Testis (tissue), 5 donors: ENCODE measurements at regions of chr7 and their contacts with region 1.

Region 1: GRCh38 chr7:102390697-102391484 is 5.3 kb upstream of the PRKRIP1 start:
- DNase-seq: peak; percentile 81
- H3K4me3 ChIP-seq: no peak overlapping the region
- H3K27ac ChIP-seq: no peak overlapping the region
- H3K4me1 ChIP-seq: no peaks in the 10 kb centered on the region
- H3K27me3 ChIP-seq: no peaks in the 10 kb centered on the region
- CTCF ChIP-seq: peak; percentile 78 to 87 (median 82)
- POLR2A ChIP-seq: no peak

Region 2: DNA sequence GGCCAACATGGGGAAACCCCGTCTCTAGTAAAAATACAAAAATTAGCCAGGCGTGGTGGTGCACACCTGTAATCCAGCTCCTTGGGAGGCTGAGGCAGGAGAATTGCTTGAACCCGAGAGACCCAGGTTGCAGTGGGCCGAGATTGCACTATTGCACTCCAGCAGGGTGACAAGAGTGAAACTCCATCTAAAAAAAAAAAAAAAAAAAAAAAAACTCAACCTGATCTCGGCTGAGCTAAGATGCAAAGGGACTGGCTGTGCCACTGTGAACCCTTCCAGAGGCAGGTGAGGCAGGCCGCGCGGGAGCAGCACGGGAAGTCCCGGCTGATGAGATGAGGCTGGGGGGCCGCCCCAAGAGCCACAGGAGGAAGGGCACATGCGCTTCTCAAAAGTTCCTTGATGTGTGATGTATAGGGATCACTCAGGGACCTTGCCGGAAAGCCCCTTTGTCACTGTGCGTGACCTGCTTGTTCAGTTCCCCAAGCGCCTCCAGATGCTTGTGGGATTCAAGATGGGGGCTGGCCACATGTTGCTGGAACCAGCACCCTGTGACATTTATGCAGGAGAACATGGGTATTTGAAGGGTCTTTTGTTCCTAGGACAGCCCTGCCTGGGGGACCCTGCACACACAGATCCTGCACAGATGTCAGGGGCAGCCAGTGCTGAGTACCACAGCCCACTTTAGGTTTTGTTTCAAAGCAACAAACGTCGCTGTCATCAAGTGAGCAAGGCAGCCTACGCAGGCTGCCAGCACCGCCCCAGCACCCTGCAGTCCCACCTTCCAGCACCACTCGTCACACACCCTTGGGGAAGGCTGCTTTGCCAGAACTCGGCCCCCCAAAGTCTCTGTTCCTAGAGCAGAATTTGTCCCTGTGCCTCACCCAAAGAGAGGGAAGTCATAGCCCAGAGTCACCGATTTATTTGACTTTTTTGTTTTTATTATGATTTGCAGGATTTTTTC is 179.0 kb before region 1 on chr7:
- intact Hi-C with region 1: no loop called
- DNase-seq: no peak
- H3K4me3 ChIP-seq: no peak overlapping the region
- H3K27ac ChIP-seq: no peak overlapping the region
- H3K4me1 ChIP-seq: no peaks in the 10 kb centered on the region
- H3K27me3 ChIP-seq: no peaks in the 10 kb centered on the region
- CTCF ChIP-seq: no peak
- POLR2A ChIP-seq: no peak

Region 3: DNA sequence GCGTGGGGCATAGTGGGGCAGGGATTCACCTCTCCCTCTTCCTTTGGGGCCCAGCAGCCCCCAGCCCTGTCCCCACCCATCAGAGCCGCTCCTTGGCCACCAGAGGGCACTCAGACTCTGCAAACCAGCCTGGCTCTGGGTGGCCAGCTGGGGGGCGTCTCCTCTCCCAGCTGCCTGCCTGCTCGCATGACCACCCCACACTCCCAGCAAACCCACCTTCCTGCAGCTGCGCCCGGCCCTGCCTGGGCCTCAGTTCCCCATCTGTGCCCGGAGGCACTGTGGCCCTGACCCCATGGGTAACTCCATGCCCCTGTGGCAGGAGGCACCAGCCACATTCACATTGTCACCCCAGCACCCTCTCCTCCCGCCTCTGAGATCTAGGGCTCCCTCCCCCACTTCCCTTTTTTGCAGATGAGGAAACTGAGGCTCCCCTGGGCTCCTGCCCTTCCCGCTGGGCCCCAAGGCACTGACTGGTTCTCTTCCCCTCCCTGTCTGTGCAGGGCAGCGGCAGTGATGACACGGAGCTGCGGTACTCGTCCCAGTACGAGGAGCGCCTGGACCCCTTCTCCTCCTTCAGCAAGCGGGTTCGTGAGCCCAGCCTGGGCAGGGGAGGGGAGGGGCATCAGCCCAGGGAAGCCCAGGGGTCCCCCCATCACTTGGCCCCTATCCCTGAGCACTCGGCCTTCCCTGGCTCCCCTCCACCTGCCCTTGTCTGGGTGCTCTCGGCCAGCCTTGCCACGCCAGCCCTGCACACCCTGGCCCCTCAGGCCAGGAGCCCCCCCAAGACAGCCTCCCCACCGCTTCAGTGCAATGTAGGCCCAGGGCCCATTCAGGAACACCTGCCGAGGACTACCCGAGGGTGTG is 111.1 kb before region 1 on chr7:
- intact Hi-C with region 1: loop called (anchors 5 kb)
- DNase-seq: no peak
- H3K4me3 ChIP-seq: no peak overlapping the region
- H3K27ac ChIP-seq: no peak overlapping the region
- H3K4me1 ChIP-seq: no peaks in the 10 kb centered on the region
- H3K27me3 ChIP-seq: no peaks in the 10 kb centered on the region
- CTCF ChIP-seq: peak; percentile 49 to 67 (median 65)
- POLR2A ChIP-seq: no peak

Region 4: DNA sequence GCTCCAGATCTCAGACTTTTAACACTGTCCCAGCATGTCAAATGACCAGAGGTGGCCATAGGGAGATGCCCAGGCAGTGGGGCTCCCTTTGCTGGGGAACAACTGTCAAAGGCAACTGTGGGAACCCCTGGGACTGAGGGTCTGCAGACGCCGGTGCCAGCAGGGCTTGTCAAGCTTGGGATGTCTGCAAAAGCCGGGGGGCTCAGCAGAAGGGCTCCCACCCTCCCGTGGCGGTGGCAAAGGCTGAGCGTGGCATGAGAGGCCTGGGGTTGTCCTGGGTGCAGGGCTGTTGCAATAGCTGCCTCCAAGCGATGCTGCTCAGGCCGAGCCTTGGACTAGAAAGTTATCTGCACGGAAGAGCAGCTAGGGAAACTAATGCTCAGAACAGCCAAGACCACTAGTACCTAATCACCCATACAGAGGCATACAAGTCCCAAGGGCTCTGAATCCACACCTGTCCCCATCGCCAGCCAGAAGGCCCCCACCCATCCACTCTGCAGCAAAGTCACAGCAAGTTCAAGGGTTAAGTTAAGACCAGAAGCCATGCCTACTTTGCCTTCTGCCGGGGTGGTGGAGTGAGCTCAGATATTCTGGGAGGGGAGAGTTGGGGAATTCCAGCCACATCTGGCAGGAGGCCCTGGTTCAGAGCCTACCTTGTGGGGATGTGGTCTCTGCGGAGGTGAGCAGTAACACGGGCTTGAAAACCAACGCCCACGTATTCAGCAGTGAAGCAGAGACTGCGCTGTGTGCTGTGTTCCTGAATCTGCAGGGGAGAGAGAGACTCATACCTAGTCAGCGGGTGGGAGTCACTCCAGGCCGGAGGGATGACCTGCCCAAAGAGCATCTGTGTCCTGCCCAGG is 99.6 kb before region 1 on chr7:
- intact Hi-C with region 1: no loop called
- DNase-seq: no peak
- H3K4me3 ChIP-seq: no peak overlapping the region
- H3K27ac ChIP-seq: no peak overlapping the region
- H3K4me1 ChIP-seq: peaks cover 6% of the 10 kb centered on the region
- H3K27me3 ChIP-seq: no peaks in the 10 kb centered on the region
- CTCF ChIP-seq: no peak
- POLR2A ChIP-seq: no peak